Thyroid gland (tissue), 4 donors: ENCODE measurements at regions of chr5 and their contacts with region 1.

Region 1: GRCh38 chr5:62354028-62354874 is 48.2 kb downstream of the KIF2A start:
- DNase-seq: no peak
- H3K4me3 ChIP-seq: no peak overlapping the region
- H3K27ac ChIP-seq: no peak overlapping the region
- H3K4me1 ChIP-seq: no peaks in the 10 kb centered on the region
- H3K27me3 ChIP-seq: no peaks in the 10 kb centered on the region
- CTCF ChIP-seq: peak in 4 of 6 experiments; percentile 16 to 63 (median 56)
- POLR2A ChIP-seq: no peak

Region 2: DNA sequence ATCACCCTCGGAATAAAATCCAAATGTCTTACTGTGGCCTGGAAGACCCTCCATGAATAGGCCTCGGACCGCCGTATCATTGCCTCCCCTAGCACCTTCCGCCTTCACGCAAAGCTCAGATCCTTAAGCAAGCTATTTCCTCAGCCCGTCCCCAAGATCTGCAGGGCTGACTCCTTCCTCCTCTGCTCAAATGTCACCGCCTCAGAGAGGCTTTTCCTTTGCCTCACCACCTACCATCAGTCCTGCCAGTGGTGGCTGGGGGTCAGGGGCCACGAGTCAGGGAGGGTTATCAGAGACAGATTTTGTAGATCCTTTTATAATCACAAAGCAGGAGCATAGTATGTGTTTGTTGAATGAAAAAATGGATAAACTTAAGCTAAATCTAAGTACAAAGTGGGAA is 122.7 kb before region 1 on chr5:
- intact Hi-C with region 1: loop called (anchors 10 kb)
- DNase-seq: no peak
- H3K4me3 ChIP-seq: no peak overlapping the region
- H3K27ac ChIP-seq: no peak overlapping the region
- H3K4me1 ChIP-seq: no peaks in the 10 kb centered on the region
- H3K27me3 ChIP-seq: no peaks in the 10 kb centered on the region
- CTCF ChIP-seq: no peak
- POLR2A ChIP-seq: no peak

Region 3: DNA sequence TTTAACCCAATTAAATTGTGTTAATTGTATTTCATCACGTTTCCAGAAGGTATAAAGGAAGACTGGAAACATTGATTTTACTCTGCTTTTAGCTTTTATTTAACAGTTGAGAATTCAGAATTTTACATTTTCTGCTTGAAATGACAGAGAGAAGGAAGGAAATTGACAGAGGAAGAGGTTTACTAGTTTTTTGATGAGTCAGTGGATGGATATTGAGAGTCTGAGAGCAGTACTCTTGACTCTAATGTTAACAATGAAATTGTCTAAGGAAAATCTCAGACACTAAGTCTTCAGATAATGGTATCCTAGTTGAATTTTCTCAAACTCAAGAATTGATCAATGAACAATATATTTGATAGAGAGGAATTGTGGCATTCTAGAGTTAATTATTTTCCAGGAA is 119.0 kb after region 1 on chr5:
- intact Hi-C with region 1: no loop called
- DNase-seq: no peak
- H3K4me3 ChIP-seq: no peak overlapping the region
- H3K27ac ChIP-seq: no peak overlapping the region
- H3K4me1 ChIP-seq: no peaks in the 10 kb centered on the region
- H3K27me3 ChIP-seq: no peaks in the 10 kb centered on the region
- CTCF ChIP-seq: no peak
- POLR2A ChIP-seq: no peak